Activated naive CD4-positive, alpha-beta T cell treated with anti-CD3 and anti-CD28 coated beads for 36 hours (primary cell): ENCODE measurements at regions of chr12 and their contacts with region 1.

Region 1: DNA sequence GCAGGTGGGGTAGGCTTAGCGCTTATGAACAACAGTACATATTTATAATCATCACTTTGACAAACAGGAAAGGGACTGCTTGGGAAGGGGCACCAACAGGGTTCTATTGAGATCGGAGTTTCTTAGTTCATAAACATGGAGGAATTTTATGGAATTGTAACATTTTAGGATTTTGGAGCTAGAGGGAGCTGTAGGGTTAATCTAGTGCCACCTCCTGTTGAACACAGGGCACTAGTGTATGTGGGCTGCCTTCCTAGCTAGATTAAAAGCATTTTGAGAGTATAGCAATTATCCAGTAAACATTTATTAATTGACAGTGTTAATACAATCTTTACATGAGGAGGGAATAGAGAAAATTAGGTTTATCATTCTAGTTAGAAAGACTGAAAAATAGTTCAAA is 23.1 kb upstream of the TBC1D30 start:
- DNase-seq: no peak
- H3K4me3 Mint-ChIP-seq: no peak overlapping the region
- H3K27ac Mint-ChIP-seq: no peak overlapping the region
- H3K4me1 Mint-ChIP-seq: peaks cover 3% of the 10 kb centered on the region
- H3K27me3 Mint-ChIP-seq: peaks cover 23% of the 10 kb centered on the region

Region 2: DNA sequence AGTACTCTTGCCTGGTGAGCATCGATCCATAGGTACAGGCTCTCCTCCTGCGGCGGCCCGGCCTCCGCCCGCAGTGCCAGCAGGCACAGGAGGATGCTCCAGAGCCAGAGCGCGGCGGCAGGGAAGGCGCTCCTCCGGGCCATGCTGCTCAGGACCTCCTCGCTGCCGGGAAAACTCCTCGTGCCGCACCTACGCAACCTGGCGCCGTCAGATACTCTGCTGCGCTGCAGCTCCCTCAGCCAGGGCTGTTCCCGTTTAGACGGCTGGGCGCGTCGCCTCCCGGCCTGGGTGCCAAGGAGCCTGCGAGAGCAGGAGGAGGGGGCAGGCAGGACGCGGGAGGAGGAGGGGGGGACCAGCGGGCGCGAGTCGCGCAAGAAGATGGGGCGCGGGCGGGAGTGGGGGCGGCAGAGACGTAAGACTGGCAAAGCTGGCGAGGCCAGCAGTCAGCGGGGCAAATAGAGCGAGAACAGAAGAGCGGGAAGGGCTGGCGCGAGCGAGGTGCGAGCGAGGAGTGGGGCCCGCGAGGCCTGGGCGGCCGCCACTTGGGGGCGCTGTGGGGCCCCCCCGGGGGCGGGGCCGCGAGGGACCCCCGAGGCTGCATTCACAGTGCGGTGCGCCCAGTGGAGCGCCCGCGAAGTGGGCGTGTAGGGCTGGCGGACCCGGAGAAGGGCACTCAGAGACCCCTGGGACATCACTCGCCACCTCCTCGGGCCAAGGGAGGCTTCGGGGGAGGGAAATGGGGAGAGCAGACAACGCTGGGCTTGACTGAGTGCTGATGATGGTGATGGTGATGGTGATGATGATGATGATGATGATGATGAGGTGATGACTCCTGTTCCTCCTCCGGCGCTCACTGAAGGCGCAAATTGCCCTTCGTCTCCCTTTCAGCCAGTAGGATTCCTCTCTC is 319.9 kb after region 1 on chr12 and contains the start of gene WIF1:
- CTCF ChIA-PET with region 1: interaction called, 9 read pairs
- intact Hi-C with region 1: loop called (anchors 1 kb)
- DNase-seq: peak; percentile 28
- H3K4me3 Mint-ChIP-seq: peak within 1 kb of the TSS; percentile 41
- H3K27ac Mint-ChIP-seq: no peak within 1 kb of the TSS
- H3K4me1 Mint-ChIP-seq: peaks cover 3% of the 10 kb centered on the region
- H3K27me3 Mint-ChIP-seq: peaks cover 24% of the 10 kb centered on the region
- total RNA-seq, gene WIF1: 0.20 TPM in 1 of 2 experiments, not detected in the other

Region 3: DNA sequence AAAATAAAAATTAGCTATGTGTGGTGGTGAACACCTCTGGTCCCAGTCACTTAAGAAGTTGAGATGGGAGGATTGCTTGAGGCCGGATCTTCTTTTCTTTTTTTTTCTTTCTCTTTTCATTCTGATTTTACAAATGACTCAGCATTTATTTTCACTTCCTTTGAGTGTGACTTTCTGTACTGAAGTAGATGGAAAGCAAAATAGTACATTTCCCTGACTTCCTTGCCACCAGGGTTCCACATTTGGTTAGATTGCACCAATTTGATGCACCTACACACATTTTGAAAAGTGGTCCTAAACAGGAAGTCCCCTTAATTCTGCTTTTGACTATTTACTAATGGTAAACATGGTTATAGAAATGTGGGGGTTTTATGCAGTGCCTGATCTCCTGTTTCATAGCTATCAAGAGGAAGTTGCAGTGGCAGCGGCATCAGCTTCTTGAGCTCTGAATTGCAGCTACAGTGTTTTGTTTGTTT is 355.0 kb after region 1 on chr12:
- CTCF ChIA-PET with region 1: no interaction called
- intact Hi-C with region 1: no loop called
- DNase-seq: peak; percentile 35
- H3K4me3 Mint-ChIP-seq: peak overlapping the region; percentile 19
- H3K27ac Mint-ChIP-seq: peak overlapping the region; percentile 37
- H3K4me1 Mint-ChIP-seq: peaks cover 16% of the 10 kb centered on the region
- H3K27me3 Mint-ChIP-seq: peaks cover 12% of the 10 kb centered on the region

Region 4: DNA sequence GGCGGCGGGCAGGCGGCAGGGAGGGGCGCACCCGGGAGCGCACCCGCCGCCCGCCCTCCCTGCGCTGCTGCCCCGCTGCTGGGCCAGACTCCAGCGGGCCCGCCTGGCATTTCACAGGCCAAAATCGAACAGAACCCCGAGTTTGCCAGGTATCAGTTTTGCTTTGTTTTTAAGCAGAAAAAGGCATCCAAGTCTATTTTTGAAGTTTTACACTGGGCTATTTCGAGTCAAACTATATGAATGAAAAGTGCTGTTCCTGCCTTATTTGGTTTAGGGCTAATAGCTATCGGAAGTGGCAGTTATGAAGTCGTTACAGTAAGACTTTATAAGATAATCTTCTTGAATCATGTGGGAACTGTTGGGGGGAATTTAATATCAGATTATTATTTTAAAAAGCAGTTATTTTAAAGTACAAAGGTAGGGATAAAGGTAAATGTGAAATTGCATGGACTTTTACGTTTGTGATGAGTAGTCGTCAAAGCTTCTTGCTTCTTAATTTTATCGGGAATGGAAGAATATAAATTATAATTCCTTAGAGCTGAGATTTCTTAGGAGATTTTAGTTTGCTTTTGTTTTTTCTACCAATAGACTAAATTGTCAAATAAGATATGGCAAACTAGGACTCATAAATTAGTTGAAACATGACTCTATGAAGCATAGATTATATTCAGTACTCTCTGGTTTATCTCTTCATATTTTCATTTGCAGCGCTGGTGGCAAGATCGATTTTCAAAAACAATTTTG is 478.2 kb after region 1 on chr12:
- CTCF ChIA-PET with region 1: no interaction called
- intact Hi-C with region 1: loop called (anchors 5 kb)
- DNase-seq: no peak
- H3K4me3 Mint-ChIP-seq: peak overlapping the region; percentile 61
- H3K27ac Mint-ChIP-seq: no peak overlapping the region
- H3K4me1 Mint-ChIP-seq: peaks cover 2% of the 10 kb centered on the region
- H3K27me3 Mint-ChIP-seq: peaks cover 44% of the 10 kb centered on the region